ENCODE measurements at regions of chr17 and their contacts with region 1.

Region 1: GRCh38 chr17:27915709-27916108 is 22.5 kb upstream of the LYRM9 start:
- DNase-seq: no peak
- ATAC-seq: no peak
- H3K4me3 ChIP-seq: no peak overlapping the region
- H3K27ac ChIP-seq: no peak overlapping the region
- H3K4me1 ChIP-seq: peaks cover 0 to 6% (median 0%) of the 10 kb centered on the region in 9 donors
- H3K27me3 ChIP-seq: no peaks in the 10 kb centered on the region
- CTCF ChIP-seq: no peak

Region 2: GRCh38 chr17:27960183-27960589 is 44.5 kb after region 1 on chr17:
- intact Hi-C with region 1: loop called in 1 of 10 experiments (anchors 5 kb)
- DNase-seq: no peak
- ATAC-seq: no peak
- H3K4me3 ChIP-seq: no peak overlapping the region
- H3K27ac ChIP-seq: no peak overlapping the region
- H3K4me1 ChIP-seq: peaks cover 0 to 3% (median 0%) of the 10 kb centered on the region in 9 donors
- H3K27me3 ChIP-seq: no peaks in the 10 kb centered on the region
- CTCF ChIP-seq: no peak

Region 3: GRCh38 chr17:27993723-27994310 is 78.1 kb after region 1 on chr17:
- intact Hi-C with region 1: no loop called
- DNase-seq: no peak
- ATAC-seq: no peak
- H3K4me3 ChIP-seq: no peak overlapping the region
- H3K27ac ChIP-seq: no peak overlapping the region
- H3K4me1 ChIP-seq: peaks cover 0 to 12% (median 3%) of the 10 kb centered on the region in 9 donors
- H3K27me3 ChIP-seq: no peaks in the 10 kb centered on the region
- CTCF ChIP-seq: no peak